Posterior vena cava (tissue), 2 donors: ENCODE measurements at regions of chr1 and their contacts with region 1.

Region 1: GRCh38 chr1:22488319-22488718 is 36.7 kb downstream of the ZBTB40 start:
- DNase-seq: no peak

Region 2: GRCh38 chr1:22442212-22442882 is 46.0 kb before region 1 on chr1:
- intact Hi-C with region 1: no loop called
- DNase-seq: no peak

Region 3: DNA sequence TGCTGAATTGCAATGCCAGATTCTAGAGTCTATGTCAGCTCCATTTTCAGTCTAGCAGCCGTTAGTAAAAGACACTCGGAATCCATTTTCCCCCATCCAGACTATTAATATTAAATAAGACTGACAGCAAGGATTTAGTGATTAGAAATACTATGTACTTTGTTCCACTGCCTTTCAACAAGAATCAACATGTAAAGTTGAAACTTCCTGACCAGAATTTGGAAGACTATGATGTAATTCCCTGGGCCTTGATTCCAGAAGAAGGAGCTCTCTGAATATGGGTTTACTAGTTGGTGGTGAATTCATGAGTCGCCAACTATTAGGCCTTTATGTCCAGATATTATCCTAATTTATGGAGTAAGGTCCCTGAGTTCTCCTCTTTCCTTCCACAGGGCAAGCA is 555.7 kb after region 1 on chr1:
- intact Hi-C with region 1: loop called in 1 of 2 experiments (anchors 10 kb)
- DNase-seq: no peak